PC-9 (cell line): ENCODE measurements at regions of chr3 and their contacts with region 1.

Region 1: GRCh38 chr3:52197842-52198668 is at the start of gene ALAS1:
- DNase-seq: peak; percentile 74 to 95
- H3K4me3 ChIP-seq: peak within 1 kb of the TSS; percentile 93
- H3K27ac ChIP-seq: no peak within 1 kb of the TSS
- H3K4me1 ChIP-seq: peaks cover 25% of the 10 kb centered on the region
- H3K27me3 ChIP-seq: no peaks in the 10 kb centered on the region
- CTCF ChIP-seq: no peak
- total RNA-seq, gene ALAS1: 61.9 and 71.2 TPM in 2 replicates

Region 2: GRCh38 chr3:52154117-52155094 is 43.6 kb before region 1 on chr3 and contains the start of gene POC1A:
- CTCF ChIA-PET with region 1: interaction called, 18 read pairs
- POLR2A ChIA-PET with region 1: no interaction called
- intact Hi-C with region 1: loop called (anchors 1 kb)
- DNase-seq: peak; percentile 93
- H3K4me3 ChIP-seq: peak within 1 kb of the TSS; percentile 90
- H3K27ac ChIP-seq: peak within 1 kb of the TSS; percentile 68
- H3K4me1 ChIP-seq: peaks cover 16% of the 10 kb centered on the region
- H3K27me3 ChIP-seq: no peaks in the 10 kb centered on the region
- CTCF ChIP-seq: no peak; the same call in 1 of the 2 replicates
- total RNA-seq, gene POC1A: 28.8 and 35.0 TPM in 2 replicates

Region 3: DNA sequence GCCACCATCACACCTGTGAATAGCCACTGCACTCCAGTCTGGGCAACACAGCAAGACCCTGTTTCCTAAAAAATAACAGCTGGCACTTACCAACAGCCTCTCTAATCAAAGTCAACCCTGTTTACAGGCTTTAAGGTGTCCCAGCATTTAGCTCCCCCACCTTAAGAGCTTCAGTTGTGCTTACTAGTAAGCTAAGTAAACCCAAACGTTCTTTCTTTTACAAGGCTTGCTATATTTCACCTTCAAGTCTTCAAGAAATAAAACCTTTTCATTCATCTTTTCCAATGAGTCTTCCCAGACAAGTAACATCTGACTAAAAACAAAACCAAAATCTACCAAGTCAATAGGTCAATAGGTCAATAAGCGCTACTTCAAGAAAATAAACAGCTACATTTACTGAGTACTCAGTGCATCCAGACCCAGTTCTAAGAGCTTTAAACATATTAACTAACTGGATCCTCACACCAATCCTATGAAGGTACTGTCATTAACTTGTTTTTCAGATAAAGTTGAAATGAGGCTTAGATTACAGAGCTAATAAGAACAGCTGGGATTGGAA is 425.3 kb after region 1 on chr3:
- CTCF ChIA-PET with region 1: no interaction called
- POLR2A ChIA-PET with region 1: no interaction called
- intact Hi-C with region 1: no loop called
- DNase-seq: no peak
- H3K4me3 ChIP-seq: no peak overlapping the region
- H3K27ac ChIP-seq: no peak overlapping the region
- H3K4me1 ChIP-seq: no peaks in the 10 kb centered on the region
- H3K27me3 ChIP-seq: no peaks in the 10 kb centered on the region
- CTCF ChIP-seq: no peak